CD8-positive, alpha-beta T cell (primary cell): ENCODE measurements at regions of chr20 and their contacts with region 1.

Region 1: DNA sequence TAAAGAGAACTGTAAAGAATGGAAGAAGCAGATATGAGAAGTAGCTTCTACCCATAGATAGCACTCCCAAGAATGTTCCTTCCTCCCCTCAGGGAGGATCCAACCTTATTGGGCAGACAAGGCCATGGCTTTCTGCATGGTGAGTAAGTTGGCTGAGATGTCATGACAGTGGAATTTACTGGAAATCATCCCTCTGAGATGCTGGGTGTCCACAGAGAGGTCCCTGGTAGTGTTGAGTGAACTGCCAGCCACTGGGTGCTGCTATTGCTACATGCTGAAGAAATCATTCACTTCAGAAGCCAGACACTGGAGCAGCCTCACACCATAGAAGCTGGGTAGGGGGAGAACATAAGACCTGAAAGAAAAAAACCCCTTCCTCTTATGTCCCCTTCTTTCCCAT is 46.4 kb upstream of the FERMT1 start:
- DNase-seq: no peak
- ATAC-seq: no peak
- H3K4me3 ChIP-seq: no peak overlapping the region
- H3K4me3 Mint-ChIP-seq: no peak overlapping the region
- H3K27ac ChIP-seq: no peak overlapping the region
- H3K27ac Mint-ChIP-seq: no peak overlapping the region
- H3K4me1 ChIP-seq: no peaks in the 10 kb centered on the region
- H3K4me1 Mint-ChIP-seq: no peaks in the 10 kb centered on the region
- H3K27me3 ChIP-seq: no peaks in the 10 kb centered on the region
- H3K27me3 Mint-ChIP-seq: peaks cover 10% of the 10 kb centered on the region
- CTCF ChIP-seq: no peak

Region 2: DNA sequence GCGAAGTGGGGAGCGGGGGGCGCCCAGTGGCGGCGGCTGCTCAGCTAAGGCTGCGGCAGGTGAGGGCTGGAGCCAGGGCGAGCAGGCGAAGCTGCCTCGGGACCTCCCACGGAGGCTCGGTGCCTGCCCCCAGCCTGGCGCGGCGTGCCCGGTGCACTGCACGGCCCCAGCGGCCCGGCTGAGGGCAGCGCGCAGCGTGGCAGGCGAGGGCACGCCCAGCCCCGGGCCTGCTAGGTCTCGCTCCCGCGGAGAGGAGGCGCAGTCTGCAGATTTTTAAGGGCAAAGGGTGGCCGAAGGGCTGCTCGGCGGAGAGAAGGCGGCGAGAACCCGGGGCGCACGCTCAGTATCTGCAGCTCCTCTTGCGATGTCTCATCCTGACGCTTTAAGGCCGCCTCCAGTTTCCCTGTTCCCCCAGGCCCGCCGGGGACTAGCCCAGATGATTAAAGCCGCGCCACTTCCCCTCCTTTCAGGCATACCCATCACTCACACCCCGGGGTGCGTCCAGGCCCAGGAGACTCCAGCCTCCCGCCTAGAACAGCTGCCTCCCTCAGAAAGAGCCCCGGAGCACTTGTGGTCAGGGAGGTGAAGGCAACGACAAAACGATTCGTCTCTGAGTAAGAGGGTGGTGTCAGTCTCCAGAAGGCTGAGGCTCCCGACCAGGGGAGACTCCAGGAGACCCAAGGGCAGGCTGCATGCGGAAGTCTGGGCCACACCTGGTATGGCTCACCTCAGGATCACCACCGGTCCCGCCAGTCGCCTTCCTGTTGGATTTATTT is 46.2 kb before region 1 on chr20 and contains the start of gene FERMT1:
- CTCF ChIA-PET with region 1: no interaction called
- POLR2A ChIA-PET with region 1: no interaction called
- intact Hi-C with region 1: loop called in 1 of 2 experiments (anchors 1 kb)
- DNase-seq: peak in 1 of 9 experiments; percentile 3
- ATAC-seq: no peak
- H3K4me3 ChIP-seq: no peak within 1 kb of the TSS
- H3K4me3 Mint-ChIP-seq: peak within 1 kb of the TSS; percentile 22
- H3K27ac ChIP-seq: no peak within 1 kb of the TSS
- H3K27ac Mint-ChIP-seq: no peak within 1 kb of the TSS
- H3K4me1 ChIP-seq: no peaks in the 10 kb centered on the region
- H3K4me1 Mint-ChIP-seq: peaks cover 9% of the 10 kb centered on the region
- H3K27me3 ChIP-seq: peaks cover 2 to 4% of the 10 kb centered on the region in 2 experiments
- H3K27me3 Mint-ChIP-seq: peaks cover 47% of the 10 kb centered on the region
- CTCF ChIP-seq: no peak
- total RNA-seq, gene FERMT1: not detected